B cell (primary cell): ENCODE measurements at regions of chr17 and their contacts with region 1.

Region 1: DNA sequence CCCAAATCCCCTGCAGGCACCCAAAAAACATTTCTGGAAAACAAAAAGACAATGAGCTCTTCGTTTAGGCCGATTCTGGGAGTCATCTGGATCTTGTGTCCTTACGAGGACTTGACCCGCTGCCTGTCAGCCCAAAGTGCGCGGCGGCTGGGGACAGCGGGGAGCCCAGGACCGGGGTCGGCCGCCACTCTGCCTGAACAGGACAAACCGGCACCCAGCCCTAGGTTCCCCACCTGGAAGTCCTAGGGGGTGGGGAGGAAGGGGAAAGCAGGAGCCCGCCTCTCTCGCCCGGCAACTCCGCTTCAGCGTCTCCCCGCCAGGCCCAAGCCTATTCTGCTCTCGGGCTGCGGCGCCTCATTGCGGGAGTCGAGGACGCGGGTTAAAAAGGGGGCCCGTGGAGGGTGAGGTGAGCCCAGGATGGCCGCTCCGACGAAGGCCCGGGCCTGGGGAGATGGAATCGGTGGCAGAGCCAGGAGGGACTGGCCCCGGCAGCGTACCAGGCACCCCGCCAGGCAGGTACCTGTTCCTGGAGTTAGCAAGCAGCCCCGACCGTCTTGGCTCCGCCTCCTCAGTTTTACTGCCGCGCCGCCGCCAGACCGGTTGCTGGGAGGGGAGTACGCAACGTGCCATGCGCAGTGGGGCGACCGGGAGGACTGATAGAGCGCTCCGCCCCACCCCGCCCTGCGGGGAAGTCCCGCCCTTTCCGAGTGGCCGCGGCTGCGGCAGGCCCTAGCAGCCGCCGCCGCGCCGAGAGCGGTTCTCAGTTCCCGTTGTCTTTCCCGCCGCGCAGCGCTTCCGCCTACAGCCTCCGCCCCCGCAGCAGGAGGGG is at the start of gene STRADA:
- DNase-seq: peak; percentile 99
- ATAC-seq: peak; percentile 89
- H3K4me3 ChIP-seq: peak within 1 kb of the TSS; percentile 85 to 99 (median 93)
- H3K4me3 Mint-ChIP-seq: peak within 1 kb of the TSS; percentile 89
- H3K27ac ChIP-seq: peak within 1 kb of the TSS; percentile 97
- H3K27ac Mint-ChIP-seq: peak within 1 kb of the TSS; percentile 93
- H3K4me1 ChIP-seq: peaks cover 15 to 28% of the 10 kb centered on the region in 2 donors
- H3K4me1 Mint-ChIP-seq: peaks cover 28% of the 10 kb centered on the region
- H3K27me3 ChIP-seq: no peaks in the 10 kb centered on the region
- H3K27me3 Mint-ChIP-seq: no peaks in the 10 kb centered on the region
- CTCF ChIP-seq: no peak
- total RNA-seq, gene STRADA: 87.4 and 93.2 TPM in 2 replicates

Region 2: DNA sequence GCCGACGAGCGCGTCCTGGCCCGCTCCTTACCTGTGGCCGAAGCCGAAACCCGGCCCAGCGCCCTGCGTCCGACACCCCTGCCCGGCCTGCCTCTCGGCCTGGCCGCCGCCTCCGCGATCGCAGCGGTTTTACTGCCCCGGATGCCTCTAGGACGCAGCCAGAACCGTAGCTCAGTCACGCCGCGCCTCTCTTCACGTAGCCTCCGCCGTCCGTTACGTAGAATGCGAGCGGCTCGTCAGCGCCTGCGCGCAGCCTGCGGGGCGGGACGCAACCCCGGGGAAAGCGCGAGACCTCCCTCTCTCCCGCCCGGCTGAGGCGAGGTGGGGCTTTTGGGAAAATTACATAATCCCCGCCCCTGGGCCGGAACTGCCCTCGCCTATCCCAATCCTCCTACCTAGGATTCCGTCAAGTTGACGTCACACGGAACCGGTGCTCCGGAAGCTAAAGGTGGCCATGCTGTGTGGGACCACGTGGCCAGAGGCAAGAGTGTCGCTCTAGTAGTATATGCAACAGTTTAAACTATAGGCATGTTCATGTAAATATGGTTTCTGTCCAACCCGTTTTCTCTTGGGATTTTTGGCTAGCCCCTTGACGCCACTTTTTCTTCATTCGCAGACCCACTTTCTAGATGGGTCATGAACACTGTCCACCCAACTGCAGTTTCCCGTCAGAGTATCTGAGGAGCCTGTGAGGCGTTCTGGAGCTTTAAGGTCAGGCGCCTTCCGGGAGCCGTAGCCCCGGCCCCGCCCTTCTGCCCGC is 32.1 kb after region 1 on chr17 and contains the start of gene CCDC47:
- CTCF ChIA-PET with region 1: interaction called, 15 read pairs
- POLR2A ChIA-PET with region 1: interaction called, 56 read pairs
- intact Hi-C with region 1: loop called (anchors 1 kb)
- DNase-seq: peak; percentile 99
- ATAC-seq: peak; percentile 78
- H3K4me3 ChIP-seq: peak within 1 kb of the TSS; percentile 78 to 99 (median 90)
- H3K4me3 Mint-ChIP-seq: peak within 1 kb of the TSS; percentile 98
- H3K27ac ChIP-seq: peak within 1 kb of the TSS; percentile 78 to 94
- H3K27ac Mint-ChIP-seq: peak within 1 kb of the TSS; percentile 99
- H3K4me1 ChIP-seq: peaks cover 28 to 34% of the 10 kb centered on the region in 2 donors
- H3K4me1 Mint-ChIP-seq: peaks cover 51% of the 10 kb centered on the region
- H3K27me3 ChIP-seq: no peaks in the 10 kb centered on the region
- H3K27me3 Mint-ChIP-seq: no peaks in the 10 kb centered on the region
- CTCF ChIP-seq: no peak
- total RNA-seq, gene CCDC47: 36.2 and 39.7 TPM in 2 replicates